Activated CD4-positive, alpha-beta memory T cell treated with anti-CD3 and anti-CD28 coated beads for 36 hours (primary cell): ENCODE measurements at regions of chr7 and their contacts with region 1.

Region 1: DNA sequence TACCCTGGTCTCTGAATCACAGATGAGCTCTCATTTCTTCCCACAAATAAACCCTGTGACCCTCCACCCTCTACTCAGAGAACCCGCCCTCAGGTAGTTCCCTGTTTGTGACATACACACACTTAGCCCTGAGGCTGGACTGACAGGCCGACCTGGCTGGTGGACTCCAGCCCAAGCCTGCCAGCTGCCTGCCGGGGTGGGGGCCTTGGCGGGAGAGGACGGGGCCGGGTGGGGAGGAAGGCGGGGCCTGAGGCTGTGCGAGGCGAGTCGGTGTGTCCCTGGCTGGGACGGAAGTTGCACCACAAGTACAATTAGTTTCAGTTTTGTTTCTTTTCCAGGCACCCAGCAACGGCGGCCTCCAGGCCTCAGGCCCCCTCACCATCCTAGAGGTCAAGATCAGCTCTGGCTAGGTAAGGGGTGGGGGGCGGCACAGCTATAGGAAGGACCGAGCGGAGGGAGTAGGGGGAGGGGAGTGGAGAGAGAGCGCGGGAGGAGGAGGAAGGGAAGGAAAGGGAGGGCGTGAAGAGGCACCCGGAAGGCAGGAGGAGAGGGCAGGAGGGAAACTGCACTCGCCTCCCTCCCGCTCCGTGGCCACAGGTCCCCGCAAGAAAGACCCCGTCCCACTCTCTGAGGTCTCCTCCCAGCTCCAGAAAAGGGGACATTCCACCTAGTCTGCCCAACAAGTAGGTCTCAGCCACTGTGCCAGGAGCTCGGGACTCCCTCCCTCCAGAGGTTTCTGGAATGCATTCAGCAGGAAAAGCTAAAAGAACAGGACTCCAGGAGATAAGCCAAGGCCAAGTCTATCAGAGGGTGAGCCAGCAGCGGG is at the start of gene TRIM56:
- DNase-seq: peak; percentile 88
- H3K4me3 Mint-ChIP-seq: peak within 1 kb of the TSS; percentile 97
- H3K27ac Mint-ChIP-seq: peak within 1 kb of the TSS; percentile 98
- H3K4me1 Mint-ChIP-seq: peaks cover 24% of the 10 kb centered on the region
- H3K27me3 Mint-ChIP-seq: no peaks in the 10 kb centered on the region
- total RNA-seq, gene TRIM56: 42.3 to 44.5 TPM

Region 2: DNA sequence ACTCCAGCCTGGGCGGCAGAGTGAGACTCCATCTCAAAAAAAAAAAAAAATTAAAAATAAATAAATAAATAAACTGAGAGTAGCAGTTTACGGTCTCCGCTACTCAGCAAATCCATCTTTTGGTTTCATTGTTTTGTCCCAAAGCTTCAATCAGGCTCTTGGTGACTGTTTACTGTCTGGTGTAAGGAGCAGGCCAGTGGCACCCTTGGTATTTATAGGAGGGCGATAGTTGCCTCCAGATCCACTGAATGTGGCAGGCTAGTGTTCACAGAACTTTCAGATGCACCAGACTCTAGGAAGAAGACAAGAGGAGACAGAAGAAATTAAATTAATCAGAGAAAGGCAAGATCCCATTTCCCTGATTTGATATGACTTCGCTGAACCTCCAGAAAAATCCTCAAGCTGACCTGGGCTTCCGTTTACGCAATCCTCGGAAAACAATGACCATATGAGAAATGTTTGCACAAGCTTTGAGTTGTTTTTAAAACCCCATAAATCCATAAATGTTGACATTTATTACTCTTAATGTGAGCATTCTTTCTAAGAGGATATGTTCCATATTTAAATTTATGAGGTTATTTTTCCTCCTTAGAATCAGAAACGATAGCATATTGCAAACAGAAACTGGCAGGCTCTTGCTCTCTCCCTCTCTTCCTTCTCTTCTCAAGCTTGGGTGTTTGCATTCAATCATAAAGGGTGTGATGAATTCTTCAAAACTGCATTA is 143.2 kb before region 1 on chr7:
- CTCF ChIA-PET with region 1: no interaction called
- POLR2A ChIA-PET with region 1: no interaction called
- intact Hi-C with region 1: no loop called
- DNase-seq: no peak
- H3K4me3 Mint-ChIP-seq: no peak overlapping the region
- H3K27ac Mint-ChIP-seq: no peak overlapping the region
- H3K4me1 Mint-ChIP-seq: no peaks in the 10 kb centered on the region
- H3K27me3 Mint-ChIP-seq: peaks cover 12% of the 10 kb centered on the region

Region 3: DNA sequence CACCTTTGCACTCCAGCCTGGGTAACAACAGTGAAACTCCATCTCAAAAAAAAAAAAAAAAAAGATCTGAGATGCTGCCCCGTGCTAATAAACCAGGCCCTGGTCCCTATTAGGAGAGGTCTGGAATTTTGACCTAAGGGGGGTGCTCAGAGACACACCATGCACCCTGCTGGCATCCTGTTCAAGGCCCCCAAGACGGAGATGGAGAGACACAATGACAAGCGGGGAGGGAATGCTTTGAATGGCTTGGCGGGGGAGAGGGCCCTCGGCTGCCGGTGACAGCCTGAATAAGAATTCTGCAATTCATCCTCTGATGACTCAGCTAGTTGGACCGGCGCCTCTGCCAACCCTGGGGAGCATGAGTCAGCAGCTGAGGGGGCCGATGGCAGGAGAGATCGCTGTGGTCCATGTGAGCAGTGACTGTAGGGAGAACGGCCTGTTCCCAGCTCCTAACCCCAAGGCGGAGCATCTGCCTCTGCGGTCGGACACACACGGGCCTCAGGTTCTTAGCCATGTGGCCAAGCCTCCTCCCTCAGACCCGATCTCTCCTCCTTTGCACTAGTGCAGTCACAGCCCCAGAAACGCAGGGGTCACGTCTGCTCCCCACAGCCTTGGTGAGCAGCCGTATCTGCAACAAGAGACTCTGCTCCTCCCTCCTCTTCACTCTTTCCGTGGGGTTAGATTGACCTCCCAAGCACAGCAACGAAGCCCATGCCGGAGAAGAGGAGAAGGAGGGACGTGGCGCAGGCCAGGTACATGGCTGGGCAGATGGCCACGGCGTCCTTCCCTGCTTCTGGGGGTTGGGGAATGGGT is 14.8 kb after region 1 on chr7:
- CTCF ChIA-PET with region 1: interaction called, 8 read pairs
- POLR2A ChIA-PET with region 1: interaction called, 10 read pairs
- intact Hi-C with region 1: no loop called
- DNase-seq: peak; percentile 85
- H3K4me3 Mint-ChIP-seq: no peak overlapping the region
- H3K27ac Mint-ChIP-seq: no peak overlapping the region
- H3K4me1 Mint-ChIP-seq: peaks cover 11% of the 10 kb centered on the region
- H3K27me3 Mint-ChIP-seq: peaks cover 19% of the 10 kb centered on the region